Activated B cell treated with CpG ODN at 0.5 μM for 24 hours (primary cell): ENCODE measurements at regions of chr1 and their contacts with region 1.

Region 1: GRCh38 chr1:8671306-8671917 is 146.0 kb downstream of the RERE start:
- DNase-seq: no peak
- ATAC-seq: peak; percentile 49
- H3K4me3 Mint-ChIP-seq: peak overlapping the region; percentile 12
- H3K27ac Mint-ChIP-seq: no peak overlapping the region
- H3K4me1 Mint-ChIP-seq: peaks cover 52% of the 10 kb centered on the region
- H3K27me3 Mint-ChIP-seq: no peaks in the 10 kb centered on the region
- CTCF ChIP-seq: no peak

Region 2: DNA sequence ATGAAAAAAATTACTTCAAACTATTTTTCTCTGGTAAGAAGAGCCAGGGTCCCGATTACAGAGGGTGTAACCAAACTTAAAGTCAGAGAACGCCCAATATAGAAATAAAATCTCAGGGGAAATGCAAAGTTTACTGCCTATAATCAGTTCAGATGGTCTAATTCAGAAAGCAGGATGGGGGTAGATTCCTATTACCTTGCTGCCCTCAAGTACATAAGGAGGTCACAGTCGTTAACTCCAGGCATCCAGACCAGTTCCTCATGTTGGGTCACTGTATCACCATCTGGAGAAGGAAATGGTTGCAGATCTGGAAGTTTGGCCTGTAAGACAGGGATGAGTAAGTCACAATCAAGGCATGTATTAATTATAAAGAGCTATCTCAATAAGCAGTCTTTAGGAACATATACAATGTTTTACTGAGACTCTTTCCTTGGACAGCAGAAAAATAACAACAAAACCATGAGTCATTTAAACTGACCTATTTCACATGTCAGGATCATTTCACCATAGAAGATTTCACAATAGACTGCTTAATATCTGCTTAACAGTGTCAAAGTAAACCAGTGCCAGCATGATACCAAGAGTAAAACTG is 174.1 kb before region 1 on chr1:
- CTCF ChIA-PET with region 1: no interaction called
- POLR2A ChIA-PET with region 1: no interaction called
- intact Hi-C with region 1: no loop called
- DNase-seq: no peak
- ATAC-seq: peak; percentile 57
- H3K4me3 Mint-ChIP-seq: peak overlapping the region; percentile 46
- H3K27ac Mint-ChIP-seq: peak overlapping the region; percentile 93
- H3K4me1 Mint-ChIP-seq: peaks cover 63% of the 10 kb centered on the region
- H3K27me3 Mint-ChIP-seq: no peaks in the 10 kb centered on the region
- CTCF ChIP-seq: no peak

Region 3: GRCh38 chr1:8571200-8571984 is 100.0 kb before region 1 on chr1:
- CTCF ChIA-PET with region 1: interaction called, 35 read pairs
- POLR2A ChIA-PET with region 1: no interaction called
- intact Hi-C with region 1: no loop called
- DNase-seq: no peak
- ATAC-seq: no peak
- H3K4me3 Mint-ChIP-seq: no peak overlapping the region
- H3K27ac Mint-ChIP-seq: no peak overlapping the region
- H3K4me1 Mint-ChIP-seq: peaks cover 11% of the 10 kb centered on the region
- H3K27me3 Mint-ChIP-seq: no peaks in the 10 kb centered on the region
- CTCF ChIP-seq: no peak

Region 4: DNA sequence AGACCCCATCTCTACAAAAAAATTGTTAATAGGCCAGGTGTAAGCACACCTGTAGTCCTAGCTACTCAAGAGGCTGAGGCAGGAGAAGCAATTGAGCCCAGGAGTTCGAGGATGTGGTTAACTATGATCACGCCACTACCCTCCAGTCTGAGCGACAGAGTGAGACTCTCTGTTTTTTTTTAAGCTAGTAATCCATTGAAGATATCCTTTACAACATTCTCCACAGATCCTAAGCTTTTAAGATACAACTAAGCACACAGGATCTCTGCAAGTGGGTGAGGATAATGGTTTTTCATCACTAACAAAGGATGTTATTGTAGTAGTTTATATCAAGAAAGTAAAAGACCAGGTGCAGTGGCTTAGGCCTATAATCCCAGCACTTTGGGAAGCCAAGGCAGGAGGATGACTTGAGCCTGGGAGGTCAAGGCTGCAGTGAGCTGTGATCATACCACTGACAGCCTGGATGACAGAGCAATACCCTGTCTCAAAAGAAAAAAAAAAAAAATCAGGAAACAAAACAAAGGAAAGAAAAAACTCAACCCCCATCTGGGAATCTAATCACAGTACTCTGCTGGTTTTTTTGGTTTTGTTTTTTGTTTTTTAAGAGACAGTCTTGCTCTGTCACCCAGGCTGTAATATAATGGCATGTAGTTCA is 20.0 kb before region 1 on chr1:
- CTCF ChIA-PET with region 1: interaction called, 4 read pairs
- POLR2A ChIA-PET with region 1: no interaction called
- intact Hi-C with region 1: loop called (anchors 2 kb)
- DNase-seq: no peak
- ATAC-seq: peak; percentile 45
- H3K4me3 Mint-ChIP-seq: no peak overlapping the region
- H3K27ac Mint-ChIP-seq: peak overlapping the region; percentile 65
- H3K4me1 Mint-ChIP-seq: peaks cover 71% of the 10 kb centered on the region
- H3K27me3 Mint-ChIP-seq: no peaks in the 10 kb centered on the region
- CTCF ChIP-seq: no peak

Region 5: GRCh38 chr1:8660411-8660828 is 11.0 kb before region 1 on chr1:
- CTCF ChIA-PET with region 1: interaction called, 16 read pairs
- POLR2A ChIA-PET with region 1: interaction called, 6 read pairs
- intact Hi-C with region 1: no loop called
- DNase-seq: no peak
- ATAC-seq: peak; percentile 38
- H3K4me3 Mint-ChIP-seq: no peak overlapping the region
- H3K27ac Mint-ChIP-seq: no peak overlapping the region
- H3K4me1 Mint-ChIP-seq: peaks cover 27% of the 10 kb centered on the region
- H3K27me3 Mint-ChIP-seq: no peaks in the 10 kb centered on the region
- CTCF ChIP-seq: no peak

Region 6: GRCh38 chr1:8721679-8722324 is 50.4 kb after region 1 on chr1:
- CTCF ChIA-PET with region 1: interaction called, 27 read pairs
- POLR2A ChIA-PET with region 1: no interaction called
- intact Hi-C with region 1: loop called (anchors 1 kb)
- DNase-seq: no peak
- ATAC-seq: no peak
- H3K4me3 Mint-ChIP-seq: no peak overlapping the region
- H3K27ac Mint-ChIP-seq: no peak overlapping the region
- H3K4me1 Mint-ChIP-seq: peaks cover 53% of the 10 kb centered on the region
- H3K27me3 Mint-ChIP-seq: no peaks in the 10 kb centered on the region
- CTCF ChIP-seq: no peak

Region 7: GRCh38 chr1:8727809-8728213 is 56.4 kb after region 1 on chr1:
- CTCF ChIA-PET with region 1: interaction called, 27 read pairs
- POLR2A ChIA-PET with region 1: interaction called, 4 read pairs
- intact Hi-C with region 1: loop called (anchors 1 kb)
- DNase-seq: no peak
- ATAC-seq: no peak
- H3K4me3 Mint-ChIP-seq: no peak overlapping the region
- H3K27ac Mint-ChIP-seq: no peak overlapping the region
- H3K4me1 Mint-ChIP-seq: peaks cover 18% of the 10 kb centered on the region
- H3K27me3 Mint-ChIP-seq: no peaks in the 10 kb centered on the region
- CTCF ChIP-seq: no peak